Activated naive CD4-positive, alpha-beta T cell treated with anti-CD3 and anti-CD28 coated beads, Interleukin-2, amount 10 ng/mL, durations not matched to agents 7 days and 5 days (primary cell): ENCODE measurements at regions of chr3 and their contacts with region 1.

Region 1: DNA sequence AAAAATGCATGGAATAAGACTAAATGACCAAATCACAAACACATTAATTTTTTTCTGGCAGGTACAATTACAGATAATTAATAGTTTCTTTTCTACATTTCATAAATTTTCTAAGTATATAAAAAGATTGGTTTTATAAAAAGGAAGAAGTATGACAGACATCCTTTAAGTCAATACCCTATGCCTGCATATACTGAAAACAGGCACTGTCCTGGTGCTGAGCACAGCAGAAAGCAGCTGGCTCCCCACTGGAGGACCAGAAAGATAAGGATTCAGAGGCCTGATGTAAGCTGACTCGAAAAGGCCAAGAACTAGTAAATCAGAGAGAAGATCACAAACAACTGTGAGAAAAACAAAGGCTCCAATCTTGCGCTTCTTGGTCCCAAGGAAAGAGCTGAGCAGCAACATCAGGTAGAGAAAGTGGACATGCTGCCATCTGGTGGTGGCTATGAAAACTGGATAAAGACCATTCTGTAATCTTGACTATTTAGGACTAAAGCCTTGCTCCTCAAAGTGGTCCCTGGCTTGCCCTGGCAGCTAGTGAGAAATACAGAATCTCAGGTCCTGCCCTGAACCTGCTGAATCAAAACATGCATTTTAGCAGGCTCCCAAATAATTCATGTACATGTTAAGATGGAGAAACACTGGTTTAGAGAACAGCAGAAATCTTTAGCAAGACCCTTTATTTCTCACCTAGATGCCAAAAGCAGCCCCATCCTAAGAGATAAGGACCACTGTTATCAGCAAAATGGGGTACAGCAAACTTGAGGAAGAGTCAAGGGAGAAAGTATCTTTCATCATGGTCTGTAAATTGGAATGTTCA is 76.0 kb downstream of the TRANK1 start:
- DNase-seq: peak; percentile 66
- H3K4me3 Mint-ChIP-seq: no peak overlapping the region
- H3K27ac Mint-ChIP-seq: no peak overlapping the region
- H3K4me1 Mint-ChIP-seq: peaks cover 8% of the 10 kb centered on the region
- H3K27me3 Mint-ChIP-seq: no peaks in the 10 kb centered on the region

Region 2: DNA sequence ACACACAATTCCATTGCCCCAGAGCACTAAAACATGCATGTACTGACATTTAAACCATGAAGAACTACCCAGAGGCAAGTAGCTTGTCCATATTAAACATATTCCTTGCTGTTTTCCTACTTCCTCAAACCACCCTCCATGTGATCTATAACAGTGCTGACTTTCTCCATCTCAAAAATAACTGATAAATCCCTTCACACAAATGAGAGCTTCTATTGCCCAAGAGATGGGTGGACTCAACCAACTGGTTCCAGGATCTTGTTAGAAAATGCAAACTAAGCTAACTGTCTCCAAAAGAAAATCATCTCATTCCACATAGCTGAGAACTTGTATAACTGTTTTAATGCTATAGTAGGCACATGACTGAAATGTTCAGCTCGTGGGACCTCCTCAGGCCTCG is 134.1 kb before region 1 on chr3:
- CTCF ChIA-PET with region 1: interaction called, 15 read pairs
- DNase-seq: no peak
- H3K4me3 Mint-ChIP-seq: no peak overlapping the region
- H3K27ac Mint-ChIP-seq: no peak overlapping the region
- H3K4me1 Mint-ChIP-seq: no peaks in the 10 kb centered on the region
- H3K27me3 Mint-ChIP-seq: peaks cover 15% of the 10 kb centered on the region

Region 3: GRCh38 chr3:36843065-36844051 is 25.5 kb before region 1 on chr3:
- CTCF ChIA-PET with region 1: interaction called, 14 read pairs
- DNase-seq: peak; percentile 71
- H3K4me3 Mint-ChIP-seq: no peak overlapping the region
- H3K27ac Mint-ChIP-seq: peak overlapping the region; percentile 73
- H3K4me1 Mint-ChIP-seq: peaks cover 35% of the 10 kb centered on the region
- H3K27me3 Mint-ChIP-seq: no peaks in the 10 kb centered on the region

Region 4: DNA sequence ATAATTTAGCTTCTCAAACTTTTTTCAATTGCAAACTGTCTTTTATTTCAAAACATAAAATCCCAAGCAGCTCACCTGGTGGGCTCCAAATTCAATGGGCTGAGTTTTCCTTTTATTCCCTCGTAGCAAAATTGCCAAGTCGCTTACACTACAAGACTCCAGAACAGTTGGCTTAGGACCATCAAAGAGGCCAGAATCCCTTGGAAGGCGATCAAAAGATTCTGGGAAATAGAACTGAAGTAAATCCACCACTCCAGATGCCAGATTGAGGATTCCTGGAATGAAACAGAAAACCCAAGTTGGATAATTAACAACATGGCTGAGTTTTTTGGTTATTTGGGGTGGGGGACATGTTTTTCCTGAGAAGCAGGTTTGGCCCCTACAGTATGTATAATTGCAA is 16.8 kb before region 1 on chr3:
- CTCF ChIA-PET with region 1: interaction called, 12 read pairs
- DNase-seq: no peak
- H3K4me3 Mint-ChIP-seq: no peak overlapping the region
- H3K27ac Mint-ChIP-seq: no peak overlapping the region
- H3K4me1 Mint-ChIP-seq: peaks cover under 1% of the 10 kb centered on the region
- H3K27me3 Mint-ChIP-seq: no peaks in the 10 kb centered on the region

Region 5: GRCh38 chr3:36895496-36896409 is 26.9 kb after region 1 on chr3:
- CTCF ChIA-PET with region 1: no interaction called
- DNase-seq: no peak
- H3K4me3 Mint-ChIP-seq: no peak overlapping the region
- H3K27ac Mint-ChIP-seq: peak overlapping the region; percentile 63
- H3K4me1 Mint-ChIP-seq: peaks cover 51% of the 10 kb centered on the region
- H3K27me3 Mint-ChIP-seq: no peaks in the 10 kb centered on the region